ENCODE measurements at regions of chr1 and their contacts with region 1.

Region 1: DNA sequence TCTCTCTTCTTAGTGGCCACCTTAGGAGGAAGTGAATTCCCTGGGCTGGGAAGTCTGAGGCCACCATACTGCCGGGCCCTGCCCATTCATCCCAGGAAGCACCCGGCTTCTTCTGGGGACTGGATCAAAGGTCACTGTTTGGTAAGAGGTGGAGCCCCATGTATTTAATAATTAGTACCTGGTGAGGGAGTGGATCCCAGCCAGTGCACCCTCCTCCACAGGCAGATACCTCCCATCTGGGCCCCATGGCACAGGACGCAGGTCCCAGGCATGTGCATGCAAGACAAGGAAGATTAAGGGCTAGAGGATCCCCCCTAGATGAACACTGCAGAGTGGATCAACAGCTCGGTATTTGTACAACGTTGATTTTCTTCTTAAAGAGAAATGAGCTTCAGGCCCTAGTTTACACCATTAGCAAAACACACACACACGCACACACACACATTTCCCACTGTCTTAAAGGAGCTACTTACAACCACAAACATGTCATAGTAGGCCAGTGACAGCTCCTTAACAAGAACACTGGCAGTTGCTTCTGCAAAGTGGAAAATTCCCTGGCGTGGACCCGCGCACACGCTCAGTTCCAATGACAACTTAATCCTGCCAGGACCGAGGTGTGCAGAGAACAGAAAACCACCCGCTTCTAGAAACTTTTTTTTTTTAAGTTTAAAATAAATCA is 90.7 kb downstream of the MRPL37 start:
- DNase-seq: no peak
- ATAC-seq: peak in 1 of 4 donors; percentile 19
- H3K4me3 ChIP-seq: no peak overlapping the region
- H3K27ac ChIP-seq: peak overlapping the region in 6 of 12 donors; percentile 37 to 63 (median 50)
- H3K4me1 ChIP-seq: peaks cover 8 to 90% (median 64%) of the 10 kb centered on the region in 12 donors
- H3K27me3 ChIP-seq: no peaks in the 10 kb centered on the region
- CTCF ChIP-seq: no peak
- POLR2A ChIP-seq: no peak

Region 2: DNA sequence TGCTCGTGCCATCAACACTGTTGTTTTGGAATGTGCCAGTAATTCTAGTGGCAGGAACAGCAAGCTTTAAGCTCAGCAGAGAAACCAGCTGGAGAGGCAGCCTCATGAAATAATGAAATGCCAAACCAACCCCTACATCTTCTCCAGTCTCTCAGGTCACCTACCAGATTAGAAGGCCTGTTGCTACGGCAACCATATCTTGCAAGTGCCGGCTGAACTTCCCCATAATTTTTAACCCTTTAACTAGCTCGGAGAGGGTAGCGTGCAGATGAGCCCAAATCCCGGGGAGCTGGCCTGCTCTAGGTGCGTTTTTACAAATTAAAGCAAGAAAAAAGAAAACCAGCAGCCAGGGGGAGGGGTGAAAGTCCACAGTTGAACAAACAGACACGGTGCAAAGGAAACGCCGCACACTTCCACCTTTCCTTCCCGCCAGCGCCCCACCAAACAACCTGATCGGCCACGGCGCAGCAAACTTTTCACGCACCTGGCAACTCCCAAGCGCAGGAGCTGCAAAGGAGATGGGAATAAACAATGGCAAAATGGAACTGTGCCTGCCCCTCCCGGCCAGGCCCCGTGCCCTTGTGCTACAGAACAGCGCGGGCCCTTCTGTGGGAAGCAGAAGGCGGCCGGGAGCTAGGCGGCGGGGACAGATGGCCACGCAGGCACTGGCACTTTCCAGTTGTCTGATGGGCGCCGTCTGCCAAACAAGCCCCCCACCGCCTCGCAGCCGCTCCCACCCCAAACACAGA is 65.5 kb after region 1 on chr1:
- intact Hi-C with region 1: loop called in 1 of 10 experiments (anchors 10 kb)
- DNase-seq: no peak
- ATAC-seq: no peak
- H3K4me3 ChIP-seq: peak overlapping the region in 4 of 12 donors; percentile 11 to 39 (median 15)
- H3K27ac ChIP-seq: peak overlapping the region in 5 of 12 donors; percentile 2 to 30 (median 13)
- H3K4me1 ChIP-seq: peaks cover 4 to 86% (median 57%) of the 10 kb centered on the region in 12 donors
- H3K27me3 ChIP-seq: no peaks in the 10 kb centered on the region
- CTCF ChIP-seq: no peak
- POLR2A ChIP-seq: no peak

Measured in heart left ventricle (tissue), 16 donors.